Dendritic cell treated with granulocyte-macrophage colony-stimulating factor and Interleukin-4, amounts not matched to agents 40 ng/mL and 50 ng/mL, for 4 days (primary cell): ENCODE measurements at regions of chr15 and their contacts with region 1.

Region 1: DNA sequence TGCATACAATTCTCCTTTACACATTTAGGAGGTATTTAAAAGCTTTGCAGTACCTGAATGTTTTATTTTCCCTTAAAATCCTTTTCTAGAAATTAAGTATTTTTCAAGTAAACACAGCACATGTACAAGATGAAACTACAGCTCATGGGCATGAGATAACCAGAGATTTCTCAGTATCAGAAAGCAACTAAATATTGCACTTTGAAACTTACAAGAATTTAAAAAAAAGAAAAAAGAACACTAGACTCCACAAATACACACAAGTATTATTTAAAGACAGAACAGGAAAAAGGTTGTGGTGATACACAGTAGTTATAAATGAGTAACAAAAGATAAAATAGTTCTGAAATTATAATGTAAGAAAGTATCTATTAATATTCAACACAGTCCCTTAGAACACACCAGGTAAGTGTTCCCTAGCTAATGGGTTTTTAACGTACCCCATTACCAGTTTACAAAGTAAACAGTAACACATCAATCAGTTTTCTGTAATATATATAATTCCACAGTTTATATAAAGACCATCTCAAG is 35.3 kb downstream of the SLTM start:
- H3K4me3 Mint-ChIP-seq: no peak overlapping the region
- H3K27ac Mint-ChIP-seq: no peak overlapping the region
- H3K4me1 Mint-ChIP-seq: no peaks in the 10 kb centered on the region
- H3K27me3 Mint-ChIP-seq: no peaks in the 10 kb centered on the region

Region 2: GRCh38 chr15:58770857-58771620 is 127.2 kb before region 1 on chr15 and contains the start of gene MINDY2:
- intact Hi-C with region 1: no loop called
- H3K4me3 Mint-ChIP-seq: peak within 1 kb of the TSS; percentile 96
- H3K27ac Mint-ChIP-seq: peak within 1 kb of the TSS; percentile 96
- H3K4me1 Mint-ChIP-seq: peaks cover 23% of the 10 kb centered on the region
- H3K27me3 Mint-ChIP-seq: no peaks in the 10 kb centered on the region

Region 3: GRCh38 chr15:59074607-59075006 is 176.4 kb after region 1 on chr15:
- intact Hi-C with region 1: loop called (anchors 10 kb)
- H3K4me3 Mint-ChIP-seq: no peak overlapping the region
- H3K27ac Mint-ChIP-seq: no peak overlapping the region
- H3K4me1 Mint-ChIP-seq: no peaks in the 10 kb centered on the region
- H3K27me3 Mint-ChIP-seq: no peaks in the 10 kb centered on the region